ENCODE measurements at regions of chr1 and their contacts with region 1.

Region 1: DNA sequence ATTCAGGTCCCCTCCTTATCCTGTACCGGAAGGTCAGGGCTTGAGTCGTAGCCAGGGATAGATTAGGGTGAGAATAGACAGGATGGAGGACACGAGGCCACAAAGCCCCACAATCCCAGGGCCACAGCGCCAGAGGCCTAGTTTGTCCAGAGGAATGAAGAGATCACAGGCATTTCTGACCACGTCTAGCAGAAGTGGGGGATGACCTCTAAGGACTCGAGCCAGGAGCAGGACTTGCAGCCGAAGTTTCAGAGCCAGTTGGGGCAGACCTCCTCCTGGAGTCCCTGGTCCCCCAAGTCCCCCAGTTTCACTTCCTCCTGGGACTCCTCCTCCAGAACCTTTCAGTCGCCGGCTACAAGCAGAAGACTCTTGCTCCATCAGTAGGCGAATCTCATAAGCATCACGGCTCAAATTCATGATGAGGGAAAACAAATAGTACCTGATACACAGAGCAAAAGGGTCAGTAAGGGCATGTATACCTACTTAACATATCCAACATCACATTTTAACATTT is 2.3 kb upstream of the ITGA10 start:
- DNase-seq: peak in 1 of 2 donors; percentile 46
- ATAC-seq: no peak
- H3K4me3 ChIP-seq: no peak overlapping the region
- H3K27ac ChIP-seq: no peak overlapping the region
- H3K4me1 ChIP-seq: no peaks in the 10 kb centered on the region
- H3K27me3 ChIP-seq: no peaks in the 10 kb centered on the region

Region 2: DNA sequence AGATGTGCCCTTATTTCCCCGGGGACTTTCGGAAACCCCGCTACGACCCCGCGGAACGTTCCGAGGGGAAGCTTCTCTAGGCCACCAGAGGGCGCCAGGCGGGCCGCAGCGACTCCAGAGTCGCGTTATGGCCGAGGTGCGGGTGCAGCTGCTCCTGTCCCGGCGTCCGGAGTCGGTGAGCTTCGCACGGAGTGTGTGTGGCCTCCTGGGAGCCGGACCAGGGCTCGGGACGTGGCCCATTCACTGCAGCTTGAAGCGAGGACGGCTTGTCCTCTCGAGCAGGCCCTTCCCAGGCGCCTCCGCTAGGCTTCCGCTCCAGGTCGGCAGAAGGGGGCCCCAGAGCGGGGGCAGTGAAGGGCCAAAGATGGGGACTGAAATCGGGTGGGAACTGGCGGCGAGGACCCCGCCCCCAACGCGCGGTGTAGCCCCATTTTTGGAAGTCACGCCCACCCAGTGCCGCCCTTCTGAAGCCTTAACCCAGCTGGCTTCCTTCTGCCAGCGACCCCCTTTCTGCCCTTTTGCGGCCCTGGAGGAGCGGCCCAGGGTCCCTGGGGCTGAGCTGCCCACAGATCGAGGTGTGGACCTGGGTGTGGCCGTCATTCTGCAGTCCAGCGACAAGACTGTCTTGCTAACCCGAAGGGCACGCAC is 66.5 kb before region 1 on chr1 and contains the start of gene NUDT17:
- intact Hi-C with region 1: loop called (anchors 5 kb)
- DNase-seq: peak; percentile 88 to 95
- ATAC-seq: peak; percentile 94
- H3K4me3 ChIP-seq: peak within 1 kb of the TSS; percentile 4 to 12
- H3K27ac ChIP-seq: peak within 1 kb of the TSS in 1 of 2 donors; percentile 66
- H3K4me1 ChIP-seq: no peaks in the 10 kb centered on the region
- H3K27me3 ChIP-seq: no peaks in the 10 kb centered on the region
- total RNA-seq, gene NUDT17: 1.2 to 2.7 TPM

Measured in aorta (tissue), 5 donors.